Caco-2 (cell line): ENCODE measurements at regions of chr2 and their contacts with region 1.

Region 1: GRCh38 chr2:54624591-54625071 is 98.8 kb upstream of the EML6 start:
- DNase-seq: no peak
- H3K4me3 ChIP-seq: no peak overlapping the region
- H3K4me3 Mint-ChIP-seq: no peak overlapping the region
- H3K27ac Mint-ChIP-seq: no peak overlapping the region
- H3K4me1 ChIP-seq: peaks cover 4% of the 10 kb centered on the region
- H3K4me1 Mint-ChIP-seq: peaks cover 23% of the 10 kb centered on the region
- H3K27me3 ChIP-seq: no peaks in the 10 kb centered on the region
- H3K27me3 Mint-ChIP-seq: no peaks in the 10 kb centered on the region
- CTCF ChIP-seq: no peak

Region 2: GRCh38 chr2:54610700-54611099 is 13.9 kb before region 1 on chr2:
- CTCF ChIA-PET with region 1: no interaction called
- POLR2A ChIA-PET with region 1: no interaction called
- intact Hi-C with region 1: loop called (anchors 1 kb)
- DNase-seq: no peak
- H3K4me3 ChIP-seq: no peak overlapping the region
- H3K4me3 Mint-ChIP-seq: no peak overlapping the region
- H3K27ac Mint-ChIP-seq: no peak overlapping the region
- H3K4me1 ChIP-seq: peaks cover 16% of the 10 kb centered on the region
- H3K4me1 Mint-ChIP-seq: peaks cover 35% of the 10 kb centered on the region
- H3K27me3 ChIP-seq: no peaks in the 10 kb centered on the region
- H3K27me3 Mint-ChIP-seq: no peaks in the 10 kb centered on the region
- CTCF ChIP-seq: no peak

Region 3: DNA sequence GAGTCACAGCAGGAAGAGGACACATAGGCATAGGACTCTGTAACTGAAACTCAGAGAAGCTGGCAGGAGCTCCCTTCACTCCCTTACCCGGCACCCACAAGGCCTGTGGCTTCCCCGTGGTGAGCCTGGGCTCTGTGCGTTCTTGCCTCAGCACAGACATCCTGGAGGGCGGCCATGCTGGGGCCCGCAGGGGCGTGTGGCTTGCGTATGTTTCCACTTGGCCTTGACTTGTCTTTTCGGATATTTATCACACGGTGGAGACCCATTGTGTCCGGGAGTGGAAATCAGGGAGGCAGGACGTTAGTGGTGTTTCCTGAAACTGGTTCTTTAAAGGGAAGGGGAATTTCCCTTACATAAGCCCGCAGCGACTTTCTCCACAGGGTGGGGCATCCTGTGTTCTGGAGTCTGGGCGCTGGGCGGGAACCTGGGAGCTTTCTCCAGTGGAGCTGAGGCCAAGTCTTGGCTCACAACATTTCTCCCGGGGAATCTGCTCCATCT is 48.9 kb after region 1 on chr2:
- CTCF ChIA-PET with region 1: no interaction called
- POLR2A ChIA-PET with region 1: no interaction called
- intact Hi-C with region 1: no loop called
- DNase-seq: no peak
- H3K4me3 ChIP-seq: no peak overlapping the region
- H3K4me3 Mint-ChIP-seq: no peak overlapping the region
- H3K27ac Mint-ChIP-seq: peak overlapping the region; percentile 47
- H3K4me1 ChIP-seq: peaks cover 41% of the 10 kb centered on the region
- H3K4me1 Mint-ChIP-seq: peaks cover 26% of the 10 kb centered on the region
- H3K27me3 ChIP-seq: no peaks in the 10 kb centered on the region
- H3K27me3 Mint-ChIP-seq: no peaks in the 10 kb centered on the region
- CTCF ChIP-seq: no peak